GM12878 (cell line): ENCODE measurements at regions of chr17 and their contacts with region 1.

Region 1: DNA sequence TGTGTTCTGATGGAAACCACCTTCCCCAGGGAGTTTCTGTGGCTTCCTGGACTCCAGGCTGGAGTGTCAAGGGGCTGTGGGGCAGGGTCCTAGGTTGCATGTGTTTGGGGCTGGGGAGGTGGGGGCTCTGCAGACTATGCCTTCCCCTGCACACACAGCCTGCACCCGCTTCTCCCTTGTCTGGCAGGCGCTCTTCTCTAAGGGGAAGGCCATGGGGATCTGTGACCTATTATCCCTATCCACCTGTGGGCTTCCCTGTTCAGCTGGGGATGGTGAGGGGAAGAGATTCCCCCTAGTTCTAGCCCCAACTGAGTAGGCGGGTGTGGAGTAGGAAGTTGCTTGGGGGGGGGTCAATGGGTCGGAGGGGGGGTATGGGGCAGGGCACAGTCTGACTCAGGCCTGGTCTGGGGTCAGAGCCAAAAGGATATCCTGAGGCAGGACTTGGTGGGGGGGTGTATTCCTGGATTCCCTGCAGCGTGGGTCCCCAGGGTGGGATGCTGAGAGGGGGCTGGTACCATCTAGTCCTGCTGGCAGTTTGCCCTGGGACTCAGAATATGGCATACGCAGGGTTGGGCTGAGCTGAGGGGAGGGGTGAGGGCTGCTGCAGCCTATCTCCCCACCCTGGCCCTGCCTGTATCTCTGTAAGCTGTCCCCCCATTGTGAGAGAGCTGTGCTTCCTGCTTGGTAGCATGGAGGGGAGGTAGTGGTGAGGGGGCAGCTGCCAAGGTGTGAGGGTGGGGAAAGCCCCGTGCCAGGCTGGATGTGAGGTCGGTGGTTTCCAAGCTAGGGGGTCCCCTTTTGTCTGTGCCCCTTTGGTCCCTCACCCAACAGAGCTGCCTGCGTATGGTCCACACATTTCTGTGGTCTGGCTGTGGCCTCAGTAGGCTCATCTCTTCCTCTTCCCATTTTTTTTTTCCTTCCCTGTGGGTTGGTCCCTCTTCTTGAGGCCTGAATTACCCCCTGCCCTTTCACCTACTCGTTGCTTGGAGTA is 14.7 kb downstream of the RARA start:
- DNase-seq: no peak
- ATAC-seq: peak; percentile 43
- H3K4me3 ChIP-seq: peak overlapping the region; percentile 91
- H3K27ac ChIP-seq: peak overlapping the region; percentile 96
- H3K4me1 ChIP-seq: peaks cover 68% of the 10 kb centered on the region
- H3K27me3 ChIP-seq: no peaks in the 10 kb centered on the region
- CTCF ChIP-seq: no peak
- EP300 ChIP-seq: no peak
- POLR2A ChIP-seq: peak; percentile 62
- RAD21 ChIP-seq: no peak

Region 2: DNA sequence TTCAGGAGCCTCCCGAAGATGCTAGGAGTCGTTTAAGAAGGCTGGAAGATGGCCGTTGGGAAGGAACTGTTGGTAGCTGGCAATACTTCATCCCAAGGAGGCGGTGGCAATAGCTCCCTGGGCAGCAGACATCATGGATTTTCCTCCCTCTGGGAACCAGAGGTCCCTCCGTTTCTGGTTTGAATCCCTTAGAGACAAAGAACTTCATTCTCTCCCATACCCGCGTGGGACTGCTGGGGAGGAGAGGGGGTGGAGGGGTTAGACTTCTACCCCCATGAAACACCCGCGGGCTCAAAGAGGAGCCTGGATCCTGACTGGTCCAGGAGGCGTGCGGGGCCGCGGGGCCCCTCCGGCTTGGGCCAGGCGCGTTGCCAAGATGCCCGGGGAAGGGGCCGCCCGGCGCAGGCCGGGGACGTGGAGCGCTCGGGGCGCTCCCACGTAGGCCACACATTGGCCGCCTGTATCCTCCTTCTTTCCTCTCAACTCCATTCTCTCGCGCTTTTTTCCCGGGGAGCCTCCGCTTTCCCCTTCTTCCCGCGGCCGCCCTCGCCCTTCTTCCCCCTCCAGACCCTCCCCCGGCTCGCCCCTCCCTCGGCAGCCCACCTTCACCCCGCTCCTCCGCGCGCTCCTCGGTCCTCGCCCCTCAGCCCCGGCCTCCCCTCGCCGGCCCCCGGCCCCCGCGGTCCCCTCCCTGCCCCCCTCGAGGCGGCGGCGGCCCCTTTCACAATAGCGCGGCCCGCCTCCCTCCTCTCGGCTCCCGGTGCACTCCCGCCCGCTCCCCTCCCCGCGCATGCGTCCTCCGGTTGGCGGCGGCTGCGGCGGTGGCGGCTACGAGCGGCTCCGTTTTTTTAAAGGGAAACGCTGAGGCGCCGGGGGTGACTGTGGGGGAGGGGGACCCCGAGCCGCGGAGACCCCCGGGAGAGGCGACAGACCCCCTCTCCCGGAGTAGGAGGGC is 202.2 kb before region 1 on chr17 and contains the start of gene MSL1:
- CTCF ChIA-PET with region 1: no interaction called
- POLR2A ChIA-PET with region 1: no interaction called
- RAD21 ChIA-PET with region 1: no interaction called
- SMC1A ChIA-PET with region 1: no interaction called
- in situ Hi-C with region 1: no loop called
- intact Hi-C with region 1: no loop called
- DNase-seq: no peak
- ATAC-seq: peak; percentile 78
- H3K4me3 ChIP-seq: peak within 1 kb of the TSS; percentile 99
- H3K27ac ChIP-seq: peak within 1 kb of the TSS; percentile 71
- H3K4me1 ChIP-seq: peaks cover 6% of the 10 kb centered on the region
- H3K27me3 ChIP-seq: no peaks in the 10 kb centered on the region
- CTCF ChIP-seq: no peak
- EP300 ChIP-seq: no peak
- POLR2A ChIP-seq: peak; percentile 76
- RAD21 ChIP-seq: no peak
- polyA plus RNA-seq, gene MSL1: 11.1 to 18.0 TPM

Region 3: DNA sequence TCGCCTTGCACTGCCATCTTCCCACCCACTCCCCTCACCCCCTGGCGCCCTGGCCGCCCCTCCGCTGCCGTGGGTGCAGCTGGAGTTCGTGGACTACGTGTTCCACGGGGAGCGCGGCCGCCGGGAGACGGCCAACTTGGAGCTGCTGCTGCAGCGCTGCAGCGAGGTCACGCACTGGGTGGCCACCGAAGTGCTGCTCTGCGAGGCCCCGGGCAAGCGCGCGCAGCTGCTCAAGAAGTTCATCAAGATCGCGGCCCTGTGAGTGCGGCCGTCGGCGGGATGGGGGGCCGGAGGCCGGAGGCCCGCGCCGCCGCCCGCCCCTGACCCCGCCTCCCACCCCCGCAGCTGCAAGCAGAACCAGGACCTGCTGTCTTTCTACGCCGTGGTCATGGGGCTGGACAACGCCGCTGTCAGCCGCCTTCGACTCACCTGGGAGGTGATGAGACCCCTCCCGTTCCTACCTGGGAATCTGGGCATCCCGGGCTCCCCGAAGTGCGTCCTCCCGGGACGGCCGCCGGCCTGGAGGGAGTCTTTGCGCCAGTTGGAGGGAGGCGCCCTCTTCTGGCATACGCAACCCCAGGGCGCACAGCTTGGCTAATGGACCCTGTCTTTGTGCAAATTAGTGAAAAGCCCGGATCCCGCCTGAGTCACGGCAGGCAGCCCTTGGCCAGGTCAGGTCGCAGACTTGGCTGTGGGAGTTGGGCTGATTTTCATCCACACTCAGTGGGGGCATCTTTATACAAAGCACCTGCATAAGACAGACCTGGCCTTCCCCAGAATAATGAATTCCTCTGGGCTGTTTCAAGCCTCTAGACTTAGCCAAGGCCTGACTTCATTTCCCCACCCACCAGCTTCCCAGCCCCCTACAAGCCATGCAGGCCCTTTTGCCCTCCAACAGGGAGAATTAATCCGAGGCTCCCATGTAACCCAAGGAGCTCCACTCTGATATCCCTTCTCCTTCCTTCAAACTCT is 132.2 kb before region 1 on chr17:
- CTCF ChIA-PET with region 1: no interaction called
- POLR2A ChIA-PET with region 1: no interaction called
- RAD21 ChIA-PET with region 1: no interaction called
- SMC1A ChIA-PET with region 1: no interaction called
- in situ Hi-C with region 1: no loop called
- intact Hi-C with region 1: no loop called
- DNase-seq: peak; percentile 30
- ATAC-seq: peak; percentile 93
- H3K4me3 ChIP-seq: peak overlapping the region; percentile 83
- H3K27ac ChIP-seq: no peak overlapping the region
- H3K4me1 ChIP-seq: peaks cover 24% of the 10 kb centered on the region
- H3K27me3 ChIP-seq: no peaks in the 10 kb centered on the region; a peak in 1 of 4 replicates
- CTCF ChIP-seq: peak; percentile 82 to 91 (median 89)
- EP300 ChIP-seq: no peak
- POLR2A ChIP-seq: peak; percentile 57
- RAD21 ChIP-seq: peak; percentile 50; the same call in 1 of the 2 replicates

Region 4: DNA sequence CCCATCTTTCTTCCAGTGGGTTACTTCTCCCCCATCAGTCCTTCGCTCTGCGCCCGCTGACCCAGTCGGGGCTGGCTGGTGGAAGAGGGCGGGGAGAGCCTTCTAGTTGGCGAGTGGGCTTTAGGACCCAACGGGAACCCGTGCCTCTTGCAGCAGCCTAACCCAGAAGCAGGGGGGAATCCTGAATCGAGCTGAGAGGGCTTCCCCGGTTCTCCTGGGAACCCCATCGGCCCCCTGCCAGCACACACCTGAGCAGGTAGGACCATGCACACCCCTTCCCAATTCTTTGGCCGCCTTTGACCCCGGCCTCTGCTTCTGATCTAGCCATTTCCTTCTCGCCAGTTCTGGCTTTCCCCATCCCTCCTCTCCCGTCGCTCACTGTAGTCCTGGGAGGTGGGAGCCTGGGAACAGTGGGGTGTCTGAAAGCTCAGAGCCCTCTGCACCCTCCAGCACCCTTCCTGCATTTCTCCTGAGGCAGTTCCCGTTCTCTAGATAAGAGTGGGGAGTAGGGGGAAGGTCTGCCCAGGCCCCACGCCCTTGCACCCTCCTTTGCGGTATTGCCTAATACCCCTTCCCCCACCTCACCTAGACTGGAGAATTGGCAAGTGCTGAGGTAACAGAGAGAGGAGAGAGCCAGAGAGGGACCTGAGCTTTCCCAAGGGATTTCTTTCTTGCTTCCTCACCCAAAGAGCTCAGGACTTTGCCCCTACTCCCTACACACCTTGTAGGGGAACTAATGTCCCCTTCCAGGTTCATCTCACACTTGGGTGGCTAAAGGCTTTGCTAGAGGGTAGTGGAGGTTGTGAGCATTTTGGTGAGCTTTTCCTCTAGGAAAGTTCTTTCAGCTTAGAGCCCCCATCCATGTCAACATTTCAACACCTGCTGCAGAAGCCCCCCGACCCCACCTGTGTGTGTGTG is 14.4 kb before region 1 on chr17 and contains the start of gene RARA:
- CTCF ChIA-PET with region 1: interaction called, 90 read pairs
- POLR2A ChIA-PET with region 1: interaction called, 123 read pairs
- RAD21 ChIA-PET with region 1: interaction called, 156 read pairs
- SMC1A ChIA-PET with region 1: interaction called, 172 read pairs
- in situ Hi-C with region 1: no loop called
- intact Hi-C with region 1: no loop called
- DNase-seq: no peak
- ATAC-seq: peak; percentile 68
- H3K4me3 ChIP-seq: peak within 1 kb of the TSS; percentile 70
- H3K27ac ChIP-seq: peak within 1 kb of the TSS; percentile 9; the same call in 1 of the 2 replicates
- H3K4me1 ChIP-seq: peaks cover 58% of the 10 kb centered on the region
- H3K27me3 ChIP-seq: no peaks in the 10 kb centered on the region
- CTCF ChIP-seq: no peak
- EP300 ChIP-seq: no peak
- POLR2A ChIP-seq: no peak
- RAD21 ChIP-seq: no peak
- polyA plus RNA-seq, gene RARA: 0.13 to 0.16 TPM